ENCODE measurements at regions of chr5 and their contacts with region 1.

Region 1: DNA sequence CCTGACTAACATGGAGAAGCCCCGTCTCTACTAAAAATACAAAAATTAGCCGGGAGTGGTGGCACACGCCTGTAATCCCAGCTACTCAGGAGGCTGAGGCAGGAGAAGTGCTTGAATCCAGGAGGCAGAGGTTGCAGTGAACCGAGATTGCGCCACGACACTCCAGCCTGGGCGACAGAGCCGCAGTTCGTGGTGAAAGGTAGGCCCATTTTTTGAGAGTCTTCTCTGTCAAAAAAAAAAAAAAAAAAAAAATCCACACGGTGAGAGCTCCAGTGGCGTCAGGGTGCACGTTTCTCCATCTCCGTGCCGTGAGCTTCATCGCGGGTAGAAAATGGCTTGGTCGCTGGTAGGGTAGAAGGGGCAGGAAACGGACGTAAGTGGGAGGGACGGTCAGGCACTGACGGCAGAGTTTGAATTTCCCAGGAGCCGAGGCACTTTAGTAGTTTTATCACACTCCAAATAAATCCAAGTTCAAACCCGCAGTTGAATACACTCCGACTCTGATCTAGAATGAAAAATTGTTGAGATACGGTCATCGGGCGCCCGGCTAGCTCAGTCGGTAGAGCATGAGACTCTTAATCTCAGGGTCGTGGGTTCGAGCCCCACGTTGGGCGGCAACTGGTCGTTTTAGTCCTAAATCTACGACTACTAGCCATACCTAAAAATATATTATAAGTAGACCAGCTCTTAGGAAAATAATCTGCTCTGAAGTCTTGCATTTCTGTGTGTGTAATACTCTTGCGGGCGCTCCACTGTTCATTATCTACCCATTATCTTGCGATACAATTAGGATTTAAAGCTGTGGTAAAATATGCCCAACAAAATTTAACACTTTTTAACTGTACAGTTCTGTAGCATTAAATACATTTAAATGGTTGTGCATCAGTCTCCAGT is 2.5 kb upstream of the TRIM7 start:
- DNase-seq: peak; percentile 93
- H3K4me3 ChIP-seq: peak overlapping the region; percentile 37 to 62 (median 40)
- H3K27ac ChIP-seq: peak overlapping the region; percentile 60
- H3K4me1 ChIP-seq: peaks cover 12% of the 10 kb centered on the region
- H3K27me3 ChIP-seq: peaks cover 0 to 2% of the 10 kb centered on the region in 2 experiments
- CTCF ChIP-seq: no peak
- POLR2A ChIP-seq: peak; percentile 52

Region 2: DNA sequence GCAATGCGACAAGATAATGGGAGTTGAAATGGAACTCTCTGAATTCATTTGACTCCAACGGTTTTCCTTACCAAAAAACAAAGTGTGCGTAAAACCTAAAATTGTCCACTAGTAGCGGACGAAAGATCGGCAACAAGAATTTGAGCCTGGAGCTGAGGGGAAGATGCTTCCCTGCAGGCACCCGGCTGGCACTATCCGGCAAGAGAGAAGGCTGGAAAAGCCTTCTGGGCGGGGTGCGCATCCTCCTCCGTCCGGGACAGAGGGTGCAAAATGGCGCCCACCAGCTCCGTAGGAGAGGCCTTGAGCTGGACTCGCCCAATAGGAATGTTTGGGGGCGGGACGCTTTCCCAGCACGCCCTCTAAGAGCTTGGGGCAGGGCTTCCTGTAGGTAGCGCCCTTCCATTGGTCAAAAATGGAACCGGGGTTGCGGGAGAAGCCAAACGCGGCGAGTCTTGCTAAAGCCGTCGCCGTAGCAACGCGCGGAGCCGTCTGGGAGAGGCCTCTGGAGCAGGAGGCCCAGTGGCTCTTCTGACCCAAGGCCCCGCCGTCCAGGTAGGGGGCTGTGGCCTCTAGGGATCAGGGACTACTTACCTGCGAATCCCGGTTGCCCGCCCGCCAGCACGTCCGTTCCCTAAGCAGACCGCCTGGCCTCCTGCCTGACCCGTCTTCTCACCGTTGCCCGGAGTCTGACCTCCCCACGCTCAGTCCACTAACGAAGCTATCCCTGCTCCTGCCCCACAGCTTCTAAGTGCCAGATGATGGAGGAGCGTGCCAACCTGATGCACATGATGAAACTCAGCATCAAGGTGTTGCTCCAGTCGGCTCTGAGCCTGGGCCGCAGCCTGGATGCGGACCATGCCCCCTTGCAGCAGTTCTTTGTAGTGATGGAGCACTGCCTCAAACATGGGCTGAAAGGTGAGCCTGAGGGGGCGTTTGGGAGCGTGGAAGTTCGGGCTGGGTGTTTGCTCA is 1647.9 kb before region 1 on chr5:
- CTCF ChIA-PET with region 1: no interaction called
- POLR2A ChIA-PET with region 1: no interaction called
- dilution Hi-C with region 1: no loop called
- intact Hi-C with region 1: loop called (anchors 10 kb)
- DNase-seq: peak; percentile 98
- H3K4me3 ChIP-seq: peak overlapping the region; percentile 22 to 83 (median 48)
- H3K27ac ChIP-seq: peak overlapping the region; percentile 56
- H3K4me1 ChIP-seq: peaks cover 13% of the 10 kb centered on the region
- H3K27me3 ChIP-seq: no peaks in the 10 kb centered on the region
- CTCF ChIP-seq: no peak
- POLR2A ChIP-seq: peak; percentile 90

Region 3: DNA sequence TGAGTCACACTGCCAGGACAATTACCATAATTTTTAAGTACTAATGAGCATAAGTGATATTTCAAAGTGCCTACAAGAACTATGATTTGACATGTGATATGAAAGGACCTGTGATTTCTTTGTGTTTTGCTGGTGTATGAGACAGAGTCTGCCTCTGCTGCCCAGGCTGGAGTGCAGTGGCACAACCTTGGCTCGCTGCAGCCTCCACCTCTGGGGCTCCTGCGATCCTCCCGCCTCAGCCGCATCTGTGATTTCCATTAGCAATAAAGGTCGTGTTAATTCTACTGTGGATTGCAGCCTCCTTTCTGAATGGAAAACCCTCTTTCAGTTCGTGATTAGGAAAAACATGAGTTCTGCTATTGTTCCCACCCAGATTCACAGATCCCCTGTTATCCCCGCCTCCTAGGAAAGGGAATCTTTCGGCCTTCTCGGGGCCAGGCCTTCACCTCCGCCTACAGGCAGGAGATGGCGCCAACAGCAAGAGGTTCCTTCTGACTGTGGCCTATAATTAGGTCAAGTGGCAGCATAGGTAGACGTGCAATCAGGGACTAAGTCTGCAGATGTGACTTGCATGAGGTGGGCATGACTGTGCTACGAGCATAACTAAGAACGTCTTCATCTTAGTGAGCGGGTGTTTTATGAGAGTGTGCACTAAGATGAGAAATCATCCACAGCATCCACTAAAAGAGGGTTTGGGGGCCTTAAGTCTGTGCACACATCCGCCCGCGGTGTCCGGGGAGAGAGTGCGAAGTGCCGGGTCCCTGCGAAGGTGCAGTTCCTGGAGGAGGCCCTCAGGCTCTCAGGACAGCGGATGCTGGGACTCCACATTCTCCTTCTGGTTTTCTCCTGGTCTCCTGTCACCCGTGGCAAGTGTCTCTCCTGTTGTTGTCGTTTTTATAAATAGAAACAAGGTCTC is 25.6 kb before region 1 on chr5:
- CTCF ChIA-PET with region 1: interaction called, 95 read pairs
- POLR2A ChIA-PET with region 1: no interaction called
- dilution Hi-C with region 1: no loop called
- intact Hi-C with region 1: no loop called
- DNase-seq: peak; percentile 77
- H3K4me3 ChIP-seq: no peak overlapping the region
- H3K27ac ChIP-seq: no peak overlapping the region
- H3K4me1 ChIP-seq: no peaks in the 10 kb centered on the region
- H3K27me3 ChIP-seq: peaks cover 3 to 4% of the 10 kb centered on the region in 2 experiments
- CTCF ChIP-seq: peak; percentile 76 to 79
- POLR2A ChIP-seq: no peak

Region 4: DNA sequence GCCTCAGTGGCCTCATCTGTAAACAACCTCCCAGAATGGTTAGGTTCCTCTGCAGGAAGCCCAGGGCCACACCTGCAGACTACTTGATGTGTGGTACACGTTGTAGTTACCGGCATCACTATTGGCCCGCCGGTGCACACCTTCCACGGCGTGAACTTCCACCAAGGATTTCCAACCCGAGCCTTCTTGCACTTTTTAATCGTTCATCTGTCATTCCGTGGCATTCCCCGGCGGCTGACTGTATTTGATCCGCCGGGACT is 10.3 kb after region 1 on chr5:
- CTCF ChIA-PET with region 1: interaction called, 8 read pairs
- POLR2A ChIA-PET with region 1: interaction called, 11 read pairs
- dilution Hi-C with region 1: no loop called
- intact Hi-C with region 1: loop called (anchors 1 kb)
- DNase-seq: no peak
- H3K4me3 ChIP-seq: peak overlapping the region in 2 of 3 experiments; percentile 7 to 9
- H3K27ac ChIP-seq: no peak overlapping the region
- H3K4me1 ChIP-seq: peaks cover 14% of the 10 kb centered on the region
- H3K27me3 ChIP-seq: peaks cover 0 to 4% of the 10 kb centered on the region in 2 experiments
- CTCF ChIP-seq: peak in 1 of 2 donors; percentile 1
- POLR2A ChIP-seq: no peak

Region 5: DNA sequence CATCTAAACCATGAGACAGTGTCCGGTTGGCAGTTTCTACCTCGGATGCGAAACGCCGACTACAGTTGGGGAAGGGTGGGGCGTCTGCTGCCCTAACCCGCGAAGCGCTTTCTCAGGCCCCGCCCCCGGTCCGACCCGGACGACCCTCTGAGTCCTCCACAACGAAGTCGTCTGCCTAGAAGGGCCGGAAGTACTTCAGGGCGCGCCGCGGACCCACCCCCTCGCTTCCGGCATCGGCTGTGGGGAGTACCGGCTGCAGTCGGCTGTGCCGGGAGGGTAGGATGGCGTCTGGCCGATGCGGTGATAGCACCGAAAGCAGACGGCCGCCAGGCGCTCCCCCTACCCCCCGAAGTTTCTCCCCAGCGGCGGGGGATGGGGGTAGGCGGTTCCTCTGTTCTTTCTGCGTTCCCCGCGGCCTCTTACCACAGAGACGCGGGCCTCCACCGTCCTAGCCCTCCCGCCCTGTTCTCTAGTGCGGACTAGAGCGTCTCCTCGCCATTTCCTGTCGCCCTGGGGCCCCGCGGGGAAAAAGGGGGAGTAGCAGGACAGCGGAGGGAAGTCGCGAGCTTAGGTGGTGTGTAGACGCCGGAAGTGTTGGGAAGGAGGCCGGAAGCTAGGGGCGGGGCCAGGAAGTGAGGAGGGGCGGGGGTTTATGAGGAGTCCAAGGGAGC is 15.7 kb after region 1 on chr5 and contains the start of gene TRIM41:
- CTCF ChIA-PET with region 1: interaction called, 4 read pairs
- POLR2A ChIA-PET with region 1: interaction called, 11 read pairs
- dilution Hi-C with region 1: no loop called
- intact Hi-C with region 1: loop called (anchors 1 kb)
- DNase-seq: peak; percentile 98
- H3K4me3 ChIP-seq: peak within 1 kb of the TSS; percentile 21 to 76 (median 64)
- H3K27ac ChIP-seq: peak within 1 kb of the TSS; percentile 88
- H3K4me1 ChIP-seq: peaks cover 10% of the 10 kb centered on the region
- H3K27me3 ChIP-seq: no peaks in the 10 kb centered on the region
- CTCF ChIP-seq: peak; percentile 4 to 26
- POLR2A ChIP-seq: no peak
- total RNA-seq, gene TRIM41: 17.3 and 19.9 TPM in 2 replicates

Region 6: GRCh38 chr5:181243512-181244343 is 36.3 kb after region 1 on chr5 and contains the start of gene RACK1:
- CTCF ChIA-PET with region 1: no interaction called
- POLR2A ChIA-PET with region 1: interaction called, 4 read pairs
- dilution Hi-C with region 1: no loop called
- intact Hi-C with region 1: loop called (anchors 1 kb)
- DNase-seq: peak; percentile 95
- H3K4me3 ChIP-seq: peak within 1 kb of the TSS; percentile 66 to 96 (median 89)
- H3K27ac ChIP-seq: peak within 1 kb of the TSS; percentile 91
- H3K4me1 ChIP-seq: peaks cover 42% of the 10 kb centered on the region
- H3K27me3 ChIP-seq: no peaks in the 10 kb centered on the region
- CTCF ChIP-seq: no peak
- POLR2A ChIP-seq: peak; percentile 93
- total RNA-seq, gene RACK1: 1,910 and 2,029 TPM in 2 replicates